Right cardiac atrium (tissue), 5 donors: ENCODE measurements at regions of chr6 and their contacts with region 1.

Region 1: GRCh38 chr6:142871910-142872331 is 73.1 kb downstream of the HIVEP2 start:
- DNase-seq: no peak
- ATAC-seq: peak; percentile 89
- H3K4me3 ChIP-seq: no peak overlapping the region
- H3K27ac ChIP-seq: peak overlapping the region; percentile 1
- H3K4me1 ChIP-seq: peaks cover 2% of the 10 kb centered on the region
- H3K27me3 ChIP-seq: no peaks in the 10 kb centered on the region

Region 2: GRCh38 chr6:142744836-142745235 is 127.1 kb before region 1 on chr6:
- intact Hi-C with region 1: no loop called
- DNase-seq: no peak
- ATAC-seq: no peak
- H3K4me3 ChIP-seq: no peak overlapping the region
- H3K27ac ChIP-seq: no peak overlapping the region
- H3K4me1 ChIP-seq: no peaks in the 10 kb centered on the region
- H3K27me3 ChIP-seq: no peaks in the 10 kb centered on the region

Region 3: DNA sequence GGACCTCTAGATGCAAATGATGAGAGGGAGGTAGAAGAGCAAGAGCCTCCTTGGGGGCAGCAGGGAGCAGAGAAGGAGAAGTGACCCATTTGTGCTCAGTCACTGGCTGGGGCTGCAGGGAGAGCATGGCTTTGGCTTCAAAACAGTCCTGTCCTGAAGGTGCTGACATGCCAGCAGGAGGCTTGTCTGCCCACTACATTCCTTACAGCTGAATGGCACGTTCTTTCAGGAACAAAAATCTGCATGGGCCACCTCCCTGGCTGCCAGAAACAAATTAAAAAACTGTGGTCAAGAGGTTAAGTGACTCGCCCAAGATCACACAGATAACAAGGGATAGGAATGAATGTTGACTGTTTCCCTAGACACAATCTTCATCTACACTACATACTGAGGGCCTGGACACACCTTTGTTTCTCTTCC is 115.7 kb before region 1 on chr6:
- intact Hi-C with region 1: loop called in 1 of 4 experiments (anchors 5 kb)
- DNase-seq: peak in 1 of 3 donors; percentile 39
- ATAC-seq: peak; percentile 57 to 66
- H3K4me3 ChIP-seq: no peak overlapping the region
- H3K27ac ChIP-seq: no peak overlapping the region
- H3K4me1 ChIP-seq: no peaks in the 10 kb centered on the region
- H3K27me3 ChIP-seq: no peaks in the 10 kb centered on the region